ENCODE measurements at regions of chr16 and their contacts with region 1.

Region 1: GRCh38 chr16:84511180-84511824 is 6.8 kb upstream of the MEAK7 start:
- DNase-seq: peak; percentile 88 to 93 (median 92)
- H3K4me3 ChIP-seq: no peak overlapping the region
- H3K27ac ChIP-seq: no peak overlapping the region
- H3K4me1 ChIP-seq: peaks cover 0 to 3% (median 0%) of the 10 kb centered on the region in 3 donors
- H3K27me3 ChIP-seq: no peaks in the 10 kb centered on the region
- CTCF ChIP-seq: peak; percentile 90

Region 2: GRCh38 chr16:84459941-84460405 is 51.3 kb before region 1 on chr16:
- intact Hi-C with region 1: no loop called
- DNase-seq: peak in 1 of 5 donors; percentile 39
- H3K4me3 ChIP-seq: no peak overlapping the region
- H3K27ac ChIP-seq: no peak overlapping the region
- H3K4me1 ChIP-seq: no peaks in the 10 kb centered on the region
- H3K27me3 ChIP-seq: no peaks in the 10 kb centered on the region
- CTCF ChIP-seq: no peak

Region 3: GRCh38 chr16:84617791-84618580 is 106.7 kb after region 1 on chr16 and contains the start of gene COTL1:
- intact Hi-C with region 1: loop called (anchors 5 kb)
- DNase-seq: peak; percentile 95 to 99 (median 97)
- H3K4me3 ChIP-seq: peak within 1 kb of the TSS; percentile 51 to 77 (median 71)
- H3K27ac ChIP-seq: peak within 1 kb of the TSS; percentile 49 to 61
- H3K4me1 ChIP-seq: peaks cover 0 to 23% (median 0%) of the 10 kb centered on the region in 3 donors
- H3K27me3 ChIP-seq: no peaks in the 10 kb centered on the region
- CTCF ChIP-seq: no peak
- total RNA-seq, gene COTL1: 122 TPM

Measured in kidney (tissue), 22 donors.